HepG2 (cell line): ENCODE measurements at regions of chr6 and their contacts with region 1.

Region 1: GRCh38 chr6:68876792-68877493 is 241.9 kb downstream of the ADGRB3 start:
- DNase-seq: peak; percentile 3
- ATAC-seq: no peak
- H3K4me3 ChIP-seq: no peak overlapping the region
- H3K27ac ChIP-seq: no peak overlapping the region
- H3K4me1 ChIP-seq: no peaks in the 10 kb centered on the region
- H3K27me3 ChIP-seq: no peaks in the 10 kb centered on the region
- CTCF ChIP-seq: no peak
- EP300 ChIP-seq: no peak
- POLR2A ChIP-seq: no peak
- RAD21 ChIP-seq: no peak

Region 2: DNA sequence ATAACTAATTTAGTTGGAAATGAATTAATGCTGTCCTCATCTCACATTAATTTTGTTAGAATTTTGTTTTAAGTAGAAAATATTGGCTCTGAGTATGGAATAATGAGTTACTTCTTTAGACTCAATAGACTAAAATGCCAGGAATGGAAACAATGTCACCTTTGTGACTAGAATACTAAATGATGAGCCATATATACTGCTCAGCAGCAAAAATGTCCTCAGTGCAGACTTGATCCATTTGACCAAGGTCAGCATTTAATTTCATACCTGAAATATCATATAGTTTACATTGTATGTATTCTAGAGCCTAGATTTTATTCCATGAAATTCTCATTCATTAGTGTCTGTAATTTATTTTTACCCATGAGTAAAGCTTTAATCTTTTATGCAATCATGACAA is 24.2 kb before region 1 on chr6:
- CTCF ChIA-PET with region 1: no interaction called
- POLR2A ChIA-PET with region 1: no interaction called
- in situ Hi-C with region 1: no loop called
- intact Hi-C with region 1: no loop called
- DNase-seq: no peak
- ATAC-seq: no peak
- H3K4me3 ChIP-seq: no peak overlapping the region
- H3K27ac ChIP-seq: no peak overlapping the region
- H3K4me1 ChIP-seq: no peaks in the 10 kb centered on the region
- H3K27me3 ChIP-seq: no peaks in the 10 kb centered on the region
- CTCF ChIP-seq: no peak
- EP300 ChIP-seq: no peak
- POLR2A ChIP-seq: no peak
- RAD21 ChIP-seq: no peak

Region 3: DNA sequence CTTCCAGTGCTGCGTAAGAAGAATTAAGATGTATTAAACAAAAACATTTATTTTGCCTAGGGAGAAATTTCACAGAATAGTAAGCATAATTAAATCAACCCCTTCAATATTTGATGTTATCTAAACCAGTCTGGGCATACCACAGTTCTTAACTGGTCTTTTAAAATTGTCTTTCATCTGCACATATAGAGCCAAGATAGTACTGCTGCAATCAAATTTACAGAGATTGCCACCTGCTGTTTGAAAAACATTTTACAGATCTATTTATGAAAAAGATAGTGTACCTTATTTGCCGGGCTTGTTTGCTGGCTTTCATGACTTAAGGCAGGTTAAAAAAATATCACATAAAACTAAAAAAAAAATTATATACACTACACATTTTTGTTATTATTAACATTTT is 81.4 kb after region 1 on chr6:
- CTCF ChIA-PET with region 1: interaction called, 3 read pairs
- POLR2A ChIA-PET with region 1: no interaction called
- in situ Hi-C with region 1: no loop called
- intact Hi-C with region 1: loop called (anchors 2 kb)
- DNase-seq: peak; percentile 2
- ATAC-seq: peak; percentile 54
- H3K4me3 ChIP-seq: no peak overlapping the region
- H3K27ac ChIP-seq: no peak overlapping the region
- H3K4me1 ChIP-seq: no peaks in the 10 kb centered on the region
- H3K27me3 ChIP-seq: no peaks in the 10 kb centered on the region
- CTCF ChIP-seq: no peak
- EP300 ChIP-seq: no peak
- POLR2A ChIP-seq: no peak
- RAD21 ChIP-seq: no peak

Region 4: DNA sequence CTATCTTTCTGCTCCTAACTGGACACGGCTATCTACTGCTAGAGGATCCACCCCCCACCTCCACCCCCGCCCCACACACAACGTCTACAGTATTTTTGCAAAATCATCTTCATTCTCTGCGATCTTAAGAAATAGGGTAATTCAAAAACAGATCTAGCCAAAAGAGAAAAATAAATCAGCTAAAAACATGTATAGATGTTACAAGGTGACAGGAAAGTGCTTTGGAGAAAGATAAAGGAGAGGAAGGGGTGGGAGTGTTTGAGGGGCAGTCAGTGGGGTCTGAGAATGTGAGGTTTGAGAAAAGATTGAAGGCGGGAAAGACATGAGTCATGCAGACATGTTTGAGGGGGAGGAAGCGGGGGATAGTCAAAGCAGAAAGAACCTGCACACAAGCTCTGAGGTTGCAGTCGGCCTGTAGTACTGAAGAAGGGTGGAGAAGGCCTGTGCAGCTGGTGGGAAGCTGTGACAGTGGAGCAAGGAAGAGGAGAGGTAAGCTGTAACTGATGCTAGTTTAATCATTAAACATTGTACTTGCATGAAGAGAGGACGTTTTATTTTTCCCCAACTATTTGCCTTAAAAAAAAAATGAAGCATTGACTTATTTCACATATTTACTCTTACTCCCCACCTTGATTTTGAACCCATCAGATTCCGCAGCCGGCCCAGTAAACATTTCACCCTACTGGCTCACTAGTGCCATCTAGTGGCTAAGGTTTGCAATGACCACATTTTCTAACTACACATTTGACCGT is 90.8 kb after region 1 on chr6:
- CTCF ChIA-PET with region 1: interaction called, 6 read pairs
- POLR2A ChIA-PET with region 1: no interaction called
- in situ Hi-C with region 1: no loop called
- intact Hi-C with region 1: loop called (anchors 1 kb)
- DNase-seq: peak; percentile 50
- ATAC-seq: peak; percentile 70
- H3K4me3 ChIP-seq: no peak overlapping the region
- H3K27ac ChIP-seq: no peak overlapping the region
- H3K4me1 ChIP-seq: no peaks in the 10 kb centered on the region
- H3K27me3 ChIP-seq: no peaks in the 10 kb centered on the region
- CTCF ChIP-seq: peak; percentile 82
- EP300 ChIP-seq: no peak
- POLR2A ChIP-seq: no peak
- RAD21 ChIP-seq: 0 out of 2 replicates have a peak, but pooled peaks have one; percentile 25